Right ventricle myocardium superior (tissue), 1 donor: ENCODE measurements at regions of chr9 and their contacts with region 1.

Region 1: GRCh38 chr9:125758986-125759763 is 12.0 kb downstream of the PBX3 start:
- DNase-seq: peak; percentile 39
- ATAC-seq: peak; percentile 81

Region 2: GRCh38 chr9:125626187-125626586 is 133.0 kb before region 1 on chr9:
- intact Hi-C with region 1: no loop called
- DNase-seq: no peak
- ATAC-seq: no peak

Region 3: DNA sequence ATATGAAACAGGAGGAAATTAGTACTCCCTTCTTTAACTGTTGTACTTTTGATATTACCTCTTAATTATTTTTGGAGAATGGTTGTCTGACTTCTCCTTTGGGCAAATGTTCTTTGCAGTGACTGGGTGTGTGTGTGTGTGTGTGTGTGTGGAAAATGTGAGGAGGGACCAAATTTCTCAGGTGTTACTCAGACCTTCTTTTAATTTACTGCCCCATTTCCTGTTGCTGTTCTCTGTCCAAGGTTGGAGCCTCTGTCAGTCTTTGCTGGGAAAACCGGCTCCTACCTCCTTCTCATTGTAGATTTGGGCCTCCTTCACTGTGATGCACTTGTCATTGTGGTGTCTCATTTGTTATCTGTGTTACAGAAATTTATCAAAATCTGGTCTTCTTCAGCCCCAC is 56.4 kb after region 1 on chr9:
- intact Hi-C with region 1: loop called (anchors 10 kb)
- DNase-seq: no peak
- ATAC-seq: no peak

Region 4: DNA sequence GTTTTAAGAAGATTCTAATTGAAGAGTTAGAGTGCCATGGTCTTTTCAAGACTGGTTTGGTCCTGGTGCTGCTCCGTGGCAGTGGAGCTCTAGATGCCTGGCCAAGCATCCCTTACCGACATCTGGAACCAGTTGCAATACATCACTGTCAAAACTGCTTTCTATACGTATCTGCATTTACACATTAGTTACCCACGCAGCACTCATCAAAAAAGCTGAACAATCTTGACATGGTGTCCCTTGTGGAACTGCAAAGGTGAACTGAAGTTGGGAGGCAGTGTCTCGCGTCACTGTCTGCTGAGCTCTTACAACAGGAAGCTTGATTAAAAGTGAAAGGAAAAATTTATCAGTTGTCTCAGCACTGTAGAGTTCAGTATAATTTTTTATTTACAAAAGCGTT is 70.6 kb after region 1 on chr9:
- intact Hi-C with region 1: no loop called
- DNase-seq: no peak
- ATAC-seq: peak; percentile 61

Region 5: GRCh38 chr9:125889476-125890419 is 130.6 kb after region 1 on chr9:
- intact Hi-C with region 1: loop called (anchors 10 kb)
- DNase-seq: peak; percentile 65
- ATAC-seq: peak; percentile 80